Aorta (tissue), 5 donors: ENCODE measurements at regions of chr5 and their contacts with region 1.

Region 1: DNA sequence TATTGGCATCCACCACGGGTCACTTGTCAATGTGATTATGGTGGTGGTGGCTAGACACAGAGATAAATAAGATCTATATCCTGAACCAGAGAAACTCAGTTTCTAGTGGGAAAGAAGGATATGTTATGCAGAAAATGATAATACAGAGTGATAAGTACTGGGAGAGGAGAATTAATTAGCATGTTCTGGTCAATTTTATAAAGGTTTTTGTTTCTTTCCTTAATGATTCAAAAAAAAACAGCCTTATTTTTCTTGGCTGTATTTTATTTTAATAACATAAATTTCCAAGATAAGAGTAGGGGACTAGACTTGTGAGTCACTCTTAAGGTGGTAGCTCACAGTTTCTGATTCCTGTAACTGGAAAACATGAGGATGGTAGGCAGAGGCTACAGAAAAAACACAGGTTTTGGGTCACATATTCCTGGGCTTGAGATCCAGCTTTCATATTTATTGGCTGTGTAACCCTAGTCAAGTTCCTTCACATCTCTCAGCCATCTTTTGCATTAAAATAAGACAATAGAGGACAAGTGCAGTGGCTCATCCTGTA is 350.3 kb upstream of the RPS23 start:
- DNase-seq: no peak
- ATAC-seq: peak; percentile 38
- H3K4me3 ChIP-seq: no peak overlapping the region
- H3K27ac ChIP-seq: peak overlapping the region in 1 of 2 donors; percentile 33
- H3K4me1 ChIP-seq: peaks cover 2 to 6% of the 10 kb centered on the region in 2 donors
- H3K27me3 ChIP-seq: no peaks in the 10 kb centered on the region

Region 2: GRCh38 chr5:82480331-82480730 is 148.1 kb before region 1 on chr5:
- intact Hi-C with region 1: no loop called
- DNase-seq: no peak
- ATAC-seq: no peak
- H3K4me3 ChIP-seq: no peak overlapping the region
- H3K27ac ChIP-seq: no peak overlapping the region
- H3K4me1 ChIP-seq: peaks cover 0 to 2% of the 10 kb centered on the region in 2 donors
- H3K27me3 ChIP-seq: no peaks in the 10 kb centered on the region

Region 3: DNA sequence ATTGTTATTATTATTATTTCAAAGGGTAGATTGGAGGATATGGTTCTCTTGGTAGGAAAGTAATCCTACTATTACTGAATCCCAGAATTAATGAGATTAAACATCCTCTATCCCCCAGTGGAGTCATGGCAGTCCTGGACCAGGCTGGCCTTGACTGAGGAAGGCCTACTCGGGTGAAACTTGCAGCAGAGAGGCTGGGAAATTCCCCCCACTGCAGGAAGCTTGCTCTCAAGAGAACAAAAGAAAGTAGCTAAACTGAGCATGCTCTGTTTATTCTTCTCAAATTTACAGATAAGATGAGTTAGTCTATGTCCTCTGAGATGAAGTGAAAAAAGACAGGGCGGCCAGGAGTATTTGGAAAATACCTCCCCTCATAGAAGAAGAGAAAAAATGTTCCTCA is 116.4 kb before region 1 on chr5:
- intact Hi-C with region 1: no loop called
- DNase-seq: no peak
- ATAC-seq: no peak
- H3K4me3 ChIP-seq: no peak overlapping the region
- H3K27ac ChIP-seq: no peak overlapping the region
- H3K4me1 ChIP-seq: peaks cover 0 to 1% of the 10 kb centered on the region in 2 donors
- H3K27me3 ChIP-seq: no peaks in the 10 kb centered on the region

Region 4: DNA sequence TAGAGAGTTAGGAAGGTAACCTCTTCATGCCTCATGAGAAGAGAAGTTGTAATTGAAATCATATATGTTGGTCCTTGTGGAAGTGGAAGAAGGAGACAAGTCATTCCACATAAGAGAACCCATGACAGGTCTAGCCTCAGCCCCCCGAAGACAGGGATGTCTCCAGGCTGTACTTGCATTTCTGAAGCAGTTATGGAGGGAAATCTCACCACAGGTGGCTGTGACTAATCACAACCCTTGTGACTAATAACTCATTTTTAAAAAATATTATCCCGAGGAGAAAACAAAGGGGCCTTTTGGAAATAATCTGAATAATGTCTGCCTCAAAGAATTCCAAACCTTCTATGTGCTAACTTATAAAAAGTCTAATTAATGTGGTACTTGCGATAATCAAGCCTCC is 88.1 kb before region 1 on chr5:
- intact Hi-C with region 1: loop called in 1 of 2 experiments (anchors 5 kb)
- DNase-seq: no peak
- ATAC-seq: no peak
- H3K4me3 ChIP-seq: no peak overlapping the region
- H3K27ac ChIP-seq: peak overlapping the region in 1 of 2 donors; percentile 57
- H3K4me1 ChIP-seq: peaks cover 0 to 8% of the 10 kb centered on the region in 2 donors
- H3K27me3 ChIP-seq: no peaks in the 10 kb centered on the region